ENCODE measurements at regions of chr17 and their contacts with region 1.

Region 1: DNA sequence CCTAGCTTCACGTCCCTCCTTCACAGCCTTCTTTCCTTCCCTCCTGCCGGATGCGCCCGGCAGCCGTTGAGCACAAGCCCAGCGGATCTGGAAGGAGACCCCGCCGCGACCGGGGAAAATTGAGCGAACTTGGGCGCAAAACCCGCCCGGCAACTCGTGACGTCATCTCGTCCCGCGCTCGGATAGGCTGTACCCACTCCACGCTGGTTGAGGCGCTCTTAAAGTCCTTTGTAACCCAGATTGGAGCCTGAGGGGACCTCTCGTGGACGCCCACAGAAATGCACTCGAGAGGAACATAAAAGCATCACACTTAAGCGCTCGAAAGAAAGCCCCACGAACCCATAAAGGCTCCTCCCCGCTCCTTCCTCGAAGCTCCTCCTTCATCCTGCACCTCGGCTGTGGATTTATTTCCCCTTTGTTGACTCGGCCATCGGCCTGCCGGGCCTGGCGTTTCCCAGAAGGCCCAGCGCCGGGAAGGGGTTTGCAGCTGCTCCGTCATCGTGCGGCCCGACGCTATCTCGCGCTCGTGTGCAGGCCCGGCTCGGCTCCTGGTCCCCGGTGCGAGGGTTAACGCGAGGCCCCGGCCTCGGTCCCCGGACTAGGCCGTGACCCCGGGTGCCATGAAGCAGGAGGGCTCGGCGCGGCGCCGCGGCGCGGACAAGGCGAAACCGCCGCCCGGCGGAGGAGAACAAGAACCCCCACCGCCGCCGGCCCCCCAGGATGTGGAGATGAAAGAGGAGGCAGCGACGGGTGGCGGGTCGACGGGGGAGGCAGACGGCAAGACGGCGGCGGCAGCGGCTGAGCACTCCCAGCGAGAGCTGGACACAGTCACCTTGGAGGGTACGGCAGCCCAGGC is at the start of gene PSMD3:
- DNase-seq: peak; percentile 97
- H3K4me3 Mint-ChIP-seq: peak within 1 kb of the TSS; percentile 96
- H3K27ac Mint-ChIP-seq: peak within 1 kb of the TSS; percentile 92
- H3K4me1 Mint-ChIP-seq: peaks cover 32% of the 10 kb centered on the region
- H3K27me3 Mint-ChIP-seq: peaks cover 6% of the 10 kb centered on the region
- total RNA-seq, gene PSMD3: 191 and 201 TPM in 2 replicates

Region 2: GRCh38 chr17:39461113-39461925 is 519.3 kb before region 1 on chr17 and contains the start of gene CDK12:
- intact Hi-C with region 1: loop called (anchors 1 kb)
- DNase-seq: peak; percentile 94
- H3K4me3 Mint-ChIP-seq: peak within 1 kb of the TSS; percentile 95
- H3K27ac Mint-ChIP-seq: peak within 1 kb of the TSS; percentile 98
- H3K4me1 Mint-ChIP-seq: peaks cover 44% of the 10 kb centered on the region
- H3K27me3 Mint-ChIP-seq: no peaks in the 10 kb centered on the region
- total RNA-seq, gene CDK12: 97.4 and 99.5 TPM in 2 replicates

Region 3: DNA sequence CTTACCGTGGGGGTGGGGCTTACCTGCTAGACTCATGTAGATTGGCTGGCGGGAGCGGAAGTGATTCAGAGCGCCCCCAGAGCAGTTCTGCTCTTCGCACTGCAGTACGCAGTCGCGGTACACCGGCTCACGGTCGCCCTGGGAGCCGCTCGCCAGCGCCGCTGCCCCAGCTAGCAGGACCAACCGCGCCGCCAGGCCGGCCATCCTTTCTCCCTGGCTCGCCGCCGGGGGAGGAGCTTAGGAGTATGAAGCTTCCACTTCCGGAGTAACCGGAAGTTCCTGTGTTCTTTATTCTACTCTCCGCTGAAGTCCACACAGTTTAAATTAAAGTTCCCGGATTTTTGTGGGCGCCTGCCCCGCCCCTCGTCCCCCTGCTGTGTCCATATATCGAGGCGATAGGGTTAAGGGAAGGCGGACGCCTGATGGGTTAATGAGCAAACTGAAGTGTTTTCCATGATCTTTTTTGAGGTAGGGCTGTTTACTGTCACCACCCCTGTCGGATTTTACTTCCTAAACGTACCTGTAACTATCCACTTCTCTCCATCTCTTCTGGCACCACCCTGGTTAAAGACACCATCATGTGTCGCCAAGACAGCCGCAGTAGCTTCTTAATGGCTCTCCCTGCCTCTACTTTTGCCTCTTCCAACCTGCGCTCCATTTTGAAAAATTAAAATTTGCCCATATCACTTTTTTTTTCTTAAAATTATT is 292.6 kb before region 1 on chr17 and contains the start of gene PGAP3:
- intact Hi-C with region 1: loop called (anchors 2 kb)
- DNase-seq: peak; percentile 73
- H3K4me3 Mint-ChIP-seq: peak within 1 kb of the TSS; percentile 94
- H3K27ac Mint-ChIP-seq: peak within 1 kb of the TSS; percentile 69
- H3K4me1 Mint-ChIP-seq: peaks cover 22% of the 10 kb centered on the region
- H3K27me3 Mint-ChIP-seq: no peaks in the 10 kb centered on the region
- total RNA-seq, gene PGAP3: 14.4 and 16.9 TPM in 2 replicates

Region 4: DNA sequence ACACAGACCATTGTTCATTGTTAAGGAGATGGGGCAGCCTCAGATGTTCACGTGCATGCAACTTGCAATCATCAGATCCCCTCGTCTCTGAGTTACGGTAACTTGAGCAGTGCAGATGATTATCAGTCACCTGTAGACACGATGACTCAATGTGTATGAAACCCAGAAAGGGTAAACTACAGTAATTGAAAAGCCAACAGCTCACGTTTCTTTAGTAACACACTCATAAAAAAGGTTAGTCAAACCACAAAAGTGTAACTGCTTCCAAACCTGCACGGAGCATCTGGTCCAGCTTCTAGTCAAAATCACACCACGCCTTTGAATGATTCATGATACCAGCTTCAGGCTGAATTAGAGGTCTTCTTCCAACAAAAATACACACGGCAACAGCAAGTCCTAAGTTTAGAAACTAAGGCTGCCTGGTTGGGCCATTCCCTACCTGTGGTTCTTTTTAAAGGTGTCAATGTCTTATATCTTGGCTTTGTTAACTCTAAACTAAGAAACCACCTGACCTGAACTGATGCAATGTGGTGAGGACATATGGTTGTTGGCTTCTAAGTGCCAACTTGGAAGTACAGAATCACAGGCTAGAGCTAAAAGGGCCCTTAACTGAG is 210.5 kb before region 1 on chr17:
- intact Hi-C with region 1: loop called (anchors 5 kb)
- DNase-seq: peak; percentile 63
- H3K4me3 Mint-ChIP-seq: peak overlapping the region; percentile 38
- H3K27ac Mint-ChIP-seq: peak overlapping the region; percentile 56
- H3K4me1 Mint-ChIP-seq: peaks cover 93% of the 10 kb centered on the region
- H3K27me3 Mint-ChIP-seq: no peaks in the 10 kb centered on the region

Region 5: GRCh38 chr17:39927101-39927928 is 53.3 kb before region 1 on chr17 and contains the starts of genes LRRC3C and ORMDL3:
- intact Hi-C with region 1: loop called (anchors 1 kb)
- DNase-seq: peak; percentile 91
- H3K4me3 Mint-ChIP-seq: peak within 1 kb of the TSS; percentile 97
- H3K27ac Mint-ChIP-seq: peak within 1 kb of the TSS; percentile 92
- H3K4me1 Mint-ChIP-seq: peaks cover 60% of the 10 kb centered on the region
- H3K27me3 Mint-ChIP-seq: no peaks in the 10 kb centered on the region
- total RNA-seq, gene LRRC3C: not detected in 2 replicates
- total RNA-seq, gene ORMDL3: 70.8 and 77.4 TPM in 2 replicates

Region 6: GRCh38 chr17:39963829-39964228 is 16.8 kb before region 1 on chr17:
- intact Hi-C with region 1: loop called (anchors 1 kb)
- DNase-seq: no peak
- H3K4me3 Mint-ChIP-seq: no peak overlapping the region
- H3K27ac Mint-ChIP-seq: peak overlapping the region; percentile 25
- H3K4me1 Mint-ChIP-seq: peaks cover 35% of the 10 kb centered on the region
- H3K27me3 Mint-ChIP-seq: peaks cover 7% of the 10 kb centered on the region